AG04449 (cell line): ENCODE measurements at regions of chr15 and their contacts with region 1.

Region 1: DNA sequence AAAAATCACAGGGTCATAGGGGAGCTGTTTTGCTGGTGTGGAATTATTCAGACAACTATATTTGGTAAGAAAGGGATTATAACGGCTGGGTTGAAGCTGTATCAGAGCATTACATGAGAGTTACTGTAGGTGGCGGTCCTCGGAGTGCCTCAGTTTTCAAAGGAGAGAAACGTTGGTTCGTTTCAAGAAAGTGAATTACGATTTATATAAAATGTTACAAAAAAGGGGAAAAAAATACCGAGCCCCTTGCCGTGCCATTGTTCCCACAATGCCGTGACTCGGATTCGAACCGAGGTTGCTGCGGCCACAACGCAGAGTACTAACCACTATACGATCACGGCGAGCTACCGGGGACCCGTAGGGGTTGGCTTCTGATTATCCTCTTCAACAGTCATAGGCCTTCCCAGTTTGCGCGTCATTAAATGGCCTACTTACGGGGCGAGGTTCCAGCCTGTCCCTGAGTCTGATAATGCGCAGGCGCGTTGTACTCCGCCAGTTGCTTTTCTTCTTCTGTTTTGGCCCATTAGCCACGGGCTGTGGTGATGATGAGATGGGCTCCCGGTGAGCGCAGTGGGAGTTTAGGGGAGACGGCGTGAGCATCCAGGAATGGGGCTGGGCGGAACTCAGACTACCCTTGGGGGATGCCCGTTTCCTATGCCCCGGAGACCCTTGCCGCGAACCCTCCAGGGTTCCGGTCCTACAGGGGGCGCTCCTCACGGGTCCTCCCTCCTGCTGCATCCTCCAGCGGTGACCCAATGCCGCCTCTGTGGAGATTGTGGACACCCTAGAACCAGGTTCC is 10.8 kb upstream of the SHF start:
- DNase-seq: peak; percentile 87
- H3K4me3 ChIP-seq: peak overlapping the region; percentile 92
- CTCF ChIP-seq: peak; percentile 87

Region 2: GRCh38 chr15:44769521-44769920 is 429.0 kb before region 1 on chr15:
- CTCF ChIA-PET with region 1: no interaction called
- POLR2A ChIA-PET with region 1: no interaction called
- DNase-seq: no peak
- H3K4me3 ChIP-seq: no peak overlapping the region
- CTCF ChIP-seq: no peak

Region 3: GRCh38 chr15:45174069-45174468 is 24.5 kb before region 1 on chr15:
- CTCF ChIA-PET with region 1: interaction called, 20 read pairs
- POLR2A ChIA-PET with region 1: no interaction called
- DNase-seq: no peak
- H3K4me3 ChIP-seq: no peak overlapping the region
- CTCF ChIP-seq: no peak

Region 4: DNA sequence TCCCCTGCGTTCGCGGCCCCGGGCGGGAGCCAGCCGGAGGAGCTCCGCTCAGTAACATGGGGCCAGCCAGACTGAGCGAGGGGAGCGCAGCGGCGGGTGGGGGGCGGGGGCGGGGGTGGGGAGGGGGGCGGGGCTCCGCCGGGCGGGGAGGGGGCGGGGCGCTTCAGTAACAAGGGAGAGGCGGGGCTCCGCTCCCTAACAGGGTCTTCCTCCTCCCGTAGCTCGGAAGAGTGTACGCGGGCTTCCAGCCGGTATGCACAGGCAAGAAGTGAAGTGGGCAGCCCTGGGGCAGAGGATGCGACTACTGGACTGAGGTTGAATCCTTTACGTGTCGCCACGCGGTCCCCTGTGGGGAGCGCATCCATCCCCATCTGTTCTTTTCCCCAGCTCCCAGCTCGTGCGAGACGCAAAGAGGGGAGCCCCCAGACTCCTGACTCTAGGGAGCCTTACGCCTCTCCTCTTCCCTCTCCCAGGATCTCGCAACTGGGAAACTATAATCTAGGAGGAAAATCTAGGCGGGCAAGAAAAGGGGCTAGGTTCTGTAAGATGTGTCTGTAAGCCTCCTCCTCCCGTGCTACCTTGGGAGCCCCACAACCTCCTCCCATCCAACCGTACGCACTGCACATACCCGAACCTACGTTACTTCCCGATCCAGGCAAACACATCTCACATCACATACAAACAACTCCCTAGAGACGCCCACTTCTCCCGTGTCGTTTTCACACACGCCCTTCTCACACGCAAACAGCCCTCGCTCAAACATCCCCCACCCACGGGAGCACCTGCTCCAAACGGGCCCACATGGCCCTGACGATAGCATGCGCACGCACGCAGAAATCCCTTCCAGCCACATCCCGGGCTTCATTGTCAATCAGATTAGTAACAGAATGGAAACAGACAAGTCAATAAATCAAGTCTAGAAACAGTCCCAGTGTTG is 10.4 kb before region 1 on chr15 and contains the start of gene SHF:
- CTCF ChIA-PET with region 1: interaction called, 34 read pairs
- POLR2A ChIA-PET with region 1: interaction called, 4 read pairs
- DNase-seq: no peak
- H3K4me3 ChIP-seq: peak within 1 kb of the TSS; percentile 71
- CTCF ChIP-seq: no peak

Region 5: DNA sequence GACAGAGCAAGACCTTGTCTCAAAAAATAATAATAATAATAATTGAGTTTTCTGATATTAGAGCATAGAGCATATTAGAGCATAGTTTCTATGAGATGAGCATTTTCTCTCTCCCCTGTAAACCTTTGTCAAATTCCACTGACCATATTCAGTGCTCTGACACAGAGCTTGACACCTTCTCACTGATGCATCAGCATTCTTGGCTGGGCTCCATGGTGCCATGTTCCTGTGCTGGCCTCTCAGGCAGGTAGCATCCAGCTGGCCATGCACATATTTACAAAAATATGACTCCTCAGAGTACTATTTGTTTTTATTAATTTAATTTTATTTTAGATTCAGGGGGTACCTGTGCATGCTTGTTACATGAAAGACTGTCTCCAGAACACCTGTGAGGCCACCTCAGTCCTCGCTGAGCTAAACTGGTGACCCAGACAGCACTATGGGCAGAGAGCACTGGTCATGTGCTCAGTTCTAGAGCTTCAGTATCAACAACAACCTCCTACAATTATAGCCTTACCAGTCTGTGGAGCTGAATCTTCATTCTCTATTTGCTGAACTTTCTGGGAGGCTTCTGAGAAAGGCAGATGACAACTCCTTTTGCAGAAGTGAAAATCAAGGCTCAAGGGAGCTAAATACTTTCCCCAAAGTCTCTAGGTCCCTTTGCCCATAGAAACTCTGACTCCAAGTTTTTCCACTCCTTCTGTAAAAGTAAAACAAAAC is 31.9 kb after region 1 on chr15:
- CTCF ChIA-PET with region 1: no interaction called
- POLR2A ChIA-PET with region 1: no interaction called
- DNase-seq: no peak
- H3K4me3 ChIP-seq: no peak overlapping the region
- CTCF ChIP-seq: no peak